Naive thymus-derived CD4-positive, alpha-beta T cell (primary cell): ENCODE measurements at regions of chr10 and their contacts with region 1.

Region 1: DNA sequence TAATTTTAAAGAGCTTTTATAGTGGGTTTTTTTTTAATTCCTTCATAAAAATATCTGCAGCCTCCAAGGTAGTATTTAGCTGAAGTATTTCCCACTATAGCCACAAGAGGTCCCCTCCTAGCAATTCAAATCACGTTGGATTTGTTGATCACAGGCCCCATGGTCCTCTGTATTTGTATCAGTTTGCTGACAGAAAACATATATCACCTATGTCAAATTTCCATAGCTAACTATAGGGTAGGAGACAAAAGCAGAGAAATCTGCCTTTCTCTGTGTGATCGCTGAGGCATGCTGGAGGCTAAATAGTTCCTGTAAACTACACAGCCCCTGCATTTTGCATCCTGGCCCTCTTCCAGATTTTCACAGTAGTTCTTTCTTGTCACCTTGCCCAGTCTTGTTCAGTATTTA is 1.7 kb upstream of the CTNNA3 start:
- DNase-seq: peak in 7 of 9 donors; percentile 34 to 68 (median 56)
- ATAC-seq: peak; percentile 88
- H3K4me3 ChIP-seq: no peak overlapping the region
- H3K4me3 Mint-ChIP-seq: no peak overlapping the region
- H3K27ac ChIP-seq: no peak overlapping the region
- H3K27ac Mint-ChIP-seq: peak overlapping the region in 1 of 9 donors; percentile 56
- H3K4me1 ChIP-seq: no peaks in the 10 kb centered on the region
- H3K4me1 Mint-ChIP-seq: peaks cover 0 to 15% (median 5%) of the 10 kb centered on the region in 7 donors
- H3K27me3 ChIP-seq: no peaks in the 10 kb centered on the region
- H3K27me3 Mint-ChIP-seq: peaks cover 4 to 41% (median 29%) of the 10 kb centered on the region in 5 donors

Region 2: DNA sequence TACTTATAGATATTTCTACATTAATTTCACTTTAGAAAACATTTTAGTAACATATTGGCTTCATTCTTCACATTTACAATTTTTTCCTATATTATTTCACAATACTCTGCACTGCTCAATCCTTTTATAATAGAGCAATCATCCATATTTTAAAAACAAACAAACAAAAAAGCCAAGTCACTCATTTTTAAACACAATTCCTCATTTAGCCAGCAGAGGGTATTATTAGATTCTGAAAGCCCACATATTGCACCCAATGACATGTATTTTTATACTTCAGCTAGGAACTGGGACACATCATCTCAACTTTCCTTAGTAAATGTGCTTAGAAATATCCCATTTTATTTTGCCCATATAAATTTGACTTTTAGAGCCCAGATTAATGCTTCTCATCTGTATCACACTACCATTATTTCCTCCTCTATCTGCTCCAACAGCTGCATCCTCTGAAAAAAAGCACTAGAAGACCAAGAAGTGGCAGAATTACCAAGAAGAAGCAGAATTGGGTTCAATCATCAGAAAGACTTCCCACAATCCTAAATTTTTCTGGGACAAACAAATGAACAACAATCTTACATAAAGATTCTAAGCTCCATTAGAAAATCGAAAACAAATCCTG is 31.2 kb before region 1 on chr10:
- CTCF ChIA-PET with region 1: no interaction called
- POLR2A ChIA-PET with region 1: no interaction called
- intact Hi-C with region 1: loop called (anchors 2 kb)
- DNase-seq: peak in 5 of 9 donors; percentile 8 to 21 (median 17)
- ATAC-seq: no peak
- H3K4me3 ChIP-seq: no peak overlapping the region
- H3K4me3 Mint-ChIP-seq: no peak overlapping the region
- H3K27ac ChIP-seq: no peak overlapping the region
- H3K27ac Mint-ChIP-seq: no peak overlapping the region
- H3K4me1 ChIP-seq: no peaks in the 10 kb centered on the region
- H3K4me1 Mint-ChIP-seq: no peaks in the 10 kb centered on the region
- H3K27me3 ChIP-seq: no peaks in the 10 kb centered on the region
- H3K27me3 Mint-ChIP-seq: peaks cover 0 to 32% (median 0%) of the 10 kb centered on the region in 5 donors